ENCODE measurements at regions of chr10 and their contacts with region 1.

Region 1: DNA sequence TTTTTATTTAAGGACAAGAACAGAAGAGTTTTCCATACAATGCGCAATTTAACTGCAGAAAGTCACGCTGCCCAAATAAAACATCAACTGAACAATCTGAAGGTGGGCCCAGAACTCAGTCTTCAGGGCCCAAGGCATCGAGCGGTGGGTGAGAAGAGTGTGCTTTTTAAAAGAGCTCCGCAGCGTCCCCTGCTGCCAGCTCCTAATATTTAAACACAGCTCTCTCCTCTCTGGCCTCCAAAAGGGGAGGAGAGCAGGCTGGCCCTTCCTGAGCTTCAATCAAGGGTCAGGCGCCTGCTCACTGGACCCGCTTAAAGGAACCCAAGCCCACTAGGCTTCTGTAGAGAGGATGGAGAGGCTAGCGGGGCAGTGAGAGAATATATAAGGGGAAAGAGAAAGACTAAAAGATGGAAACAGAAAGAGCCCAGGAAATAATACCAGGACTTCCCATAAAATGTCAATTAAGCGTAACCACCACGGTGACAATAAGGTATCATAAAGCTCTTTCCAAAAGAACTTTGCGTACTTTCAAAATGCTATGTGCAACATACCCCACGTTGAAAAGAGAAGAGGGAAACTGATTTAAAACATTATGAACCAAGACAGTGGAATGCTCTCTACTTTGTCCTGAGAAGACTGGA is 2.8 kb downstream of the FAM53B start:
- DNase-seq: peak in 1 of 2 experiments; percentile 90
- H3K4me3 ChIP-seq: peak overlapping the region in 1 of 4 experiments; percentile 35; a peak in 1 of 8 replicates
- H3K27ac ChIP-seq: no peak overlapping the region
- H3K4me1 ChIP-seq: peaks cover 29 to 45% (median 32%) of the 10 kb centered on the region in 4 experiments
- H3K27me3 ChIP-seq: peaks cover 1 to 21% (median 14%) of the 10 kb centered on the region in 4 experiments; a peak in 6 of 7 replicates
- CTCF ChIP-seq: peak; percentile 53 to 82 (median 82)
- EP300 ChIP-seq: no peak
- POLR2A ChIP-seq: no peak
- RAD21 ChIP-seq: peak; percentile 72 to 79

Region 2: DNA sequence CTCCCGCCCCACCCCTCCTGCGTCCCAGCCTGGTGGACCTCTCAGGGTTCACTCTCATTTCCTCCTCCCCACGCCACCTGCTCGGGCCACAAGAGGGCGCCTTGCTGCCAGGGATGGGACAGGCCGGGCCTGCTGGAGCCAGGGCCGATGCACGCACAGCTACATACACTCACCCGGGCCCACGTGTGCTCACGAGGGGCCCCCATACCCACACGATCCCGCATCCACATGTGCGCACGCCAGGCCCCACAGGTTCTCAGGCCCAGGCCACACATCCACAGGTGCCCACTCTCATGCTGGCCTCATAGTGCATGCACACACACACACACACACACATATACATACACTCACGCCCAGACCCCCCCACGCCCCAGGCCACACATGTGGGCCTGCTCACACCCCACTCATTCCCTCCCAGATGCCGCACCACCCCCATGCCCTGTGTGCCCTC is 211.2 kb before region 1 on chr10:
- CTCF ChIA-PET with region 1: interaction called, 49 read pairs
- POLR2A ChIA-PET with region 1: no interaction called
- DNase-seq: peak; percentile 36 to 96
- H3K4me3 ChIP-seq: no peak overlapping the region
- H3K27ac ChIP-seq: no peak overlapping the region
- H3K4me1 ChIP-seq: peaks cover 0 to 20% (median 4%) of the 10 kb centered on the region in 4 experiments; a peak in 5 of 7 replicates
- H3K27me3 ChIP-seq: no peaks in the 10 kb centered on the region
- CTCF ChIP-seq: peak in 2 of 3 experiments; percentile 95; a peak in 3 of 4 replicates
- EP300 ChIP-seq: no peak
- POLR2A ChIP-seq: no peak
- RAD21 ChIP-seq: peak; percentile 91 to 94

Region 3: GRCh38 chr10:124565565-124566256 is 175.7 kb before region 1 on chr10:
- CTCF ChIA-PET with region 1: interaction called, 10 read pairs
- POLR2A ChIA-PET with region 1: no interaction called
- DNase-seq: peak; percentile 53 to 87
- H3K4me3 ChIP-seq: no peak overlapping the region
- H3K27ac ChIP-seq: no peak overlapping the region
- H3K4me1 ChIP-seq: peaks cover 3 to 9% (median 7%) of the 10 kb centered on the region in 4 experiments; a peak in 6 of 7 replicates
- H3K27me3 ChIP-seq: no peaks in the 10 kb centered on the region
- CTCF ChIP-seq: peak; percentile 79 to 86 (median 85)
- EP300 ChIP-seq: no peak
- POLR2A ChIP-seq: no peak
- RAD21 ChIP-seq: peak; percentile 82 to 90

Region 4: DNA sequence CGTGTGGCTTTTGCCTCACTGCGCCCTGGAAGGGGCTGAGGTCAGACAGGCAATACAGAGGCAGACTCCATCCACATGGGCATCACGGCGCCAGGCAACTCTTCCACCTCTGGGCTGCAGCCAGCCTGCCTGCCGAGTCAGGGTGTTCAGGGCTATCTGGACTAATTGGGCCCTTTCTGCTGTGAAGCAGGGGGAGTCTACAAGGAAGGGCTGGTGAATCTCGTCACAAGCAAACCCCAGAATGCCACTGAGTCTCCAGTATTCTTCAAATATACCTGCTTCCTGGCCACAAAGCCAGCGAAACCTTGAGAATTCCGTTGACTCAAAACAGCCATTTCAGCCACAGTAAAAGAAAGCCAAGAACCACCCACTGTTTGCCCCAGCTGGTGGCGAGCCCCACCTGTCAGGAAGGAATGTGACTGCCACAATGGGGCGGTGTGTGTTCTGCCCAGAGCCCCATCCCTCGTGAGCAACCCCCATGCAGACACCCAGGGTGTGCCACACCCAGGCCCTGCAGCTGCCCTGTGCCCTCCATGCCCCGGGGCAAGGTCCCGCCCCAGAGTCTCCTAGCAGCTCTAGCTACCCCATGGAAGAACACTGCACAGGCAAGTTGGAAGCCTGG is 114.5 kb before region 1 on chr10:
- CTCF ChIA-PET with region 1: interaction called, 20 read pairs
- POLR2A ChIA-PET with region 1: interaction called, 4 read pairs
- DNase-seq: no peak
- H3K4me3 ChIP-seq: no peak overlapping the region
- H3K27ac ChIP-seq: no peak overlapping the region
- H3K4me1 ChIP-seq: peaks cover 6 to 21% (median 12%) of the 10 kb centered on the region in 4 experiments
- H3K27me3 ChIP-seq: no peaks in the 10 kb centered on the region; a peak in 1 of 7 replicates
- CTCF ChIP-seq: no peak
- EP300 ChIP-seq: no peak
- POLR2A ChIP-seq: no peak
- RAD21 ChIP-seq: no peak

Region 5: DNA sequence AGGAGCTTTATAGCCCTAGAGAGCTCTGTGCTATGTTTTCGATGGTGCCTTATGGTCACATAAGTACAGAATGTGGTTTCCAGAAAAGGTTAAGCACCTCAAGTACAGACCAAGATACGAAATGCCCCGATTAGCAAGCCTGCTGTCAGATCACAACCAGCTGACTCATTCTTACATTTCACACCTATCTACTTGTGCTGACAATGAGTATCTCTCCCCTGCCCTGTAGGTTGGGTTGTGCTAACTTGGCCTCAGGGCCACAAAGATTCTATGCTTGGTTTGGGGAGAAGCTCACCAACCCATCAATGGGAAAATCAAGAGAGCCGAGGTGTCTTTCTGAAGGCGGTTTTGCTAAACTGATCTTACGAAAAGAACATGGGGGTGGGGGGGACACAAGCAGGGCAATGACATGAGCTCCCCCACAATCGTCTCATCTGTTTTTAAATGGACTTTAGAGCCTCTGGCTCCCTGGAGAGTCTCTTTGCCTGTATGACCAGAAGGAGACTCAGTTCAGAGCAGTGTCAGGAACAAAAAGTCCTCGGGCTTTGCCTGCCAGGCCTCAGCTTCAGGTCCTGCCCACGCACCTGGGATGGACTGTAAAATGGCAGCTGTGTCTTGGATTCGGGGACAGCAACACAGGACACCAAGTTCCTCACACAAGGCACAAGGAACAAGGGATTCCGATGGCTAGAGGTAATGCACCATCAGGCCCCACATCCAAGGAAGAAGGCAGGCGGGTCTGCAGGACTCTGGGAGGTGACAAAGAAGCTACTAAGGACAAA is 52.3 kb before region 1 on chr10:
- CTCF ChIA-PET with region 1: interaction called, 19 read pairs
- POLR2A ChIA-PET with region 1: no interaction called
- DNase-seq: no peak
- H3K4me3 ChIP-seq: no peak overlapping the region
- H3K27ac ChIP-seq: no peak overlapping the region
- H3K4me1 ChIP-seq: peaks cover 0 to 10% (median 5%) of the 10 kb centered on the region in 4 experiments; a peak in 3 of 7 replicates
- H3K27me3 ChIP-seq: no peaks in the 10 kb centered on the region
- CTCF ChIP-seq: no peak
- EP300 ChIP-seq: no peak
- POLR2A ChIP-seq: no peak
- RAD21 ChIP-seq: no peak

Region 6: GRCh38 chr10:124719213-124719851 is 22.1 kb before region 1 on chr10:
- CTCF ChIA-PET with region 1: interaction called, 86 read pairs
- POLR2A ChIA-PET with region 1: interaction called, 5 read pairs
- DNase-seq: no peak
- H3K4me3 ChIP-seq: no peak overlapping the region
- H3K27ac ChIP-seq: no peak overlapping the region
- H3K4me1 ChIP-seq: peaks cover 0 to 1% (median 0%) of the 10 kb centered on the region in 4 experiments; a peak in 1 of 7 replicates
- H3K27me3 ChIP-seq: no peaks in the 10 kb centered on the region
- CTCF ChIP-seq: peak; percentile 48 to 68 (median 57); a peak in 3 of 4 replicates
- EP300 ChIP-seq: no peak
- POLR2A ChIP-seq: no peak
- RAD21 ChIP-seq: peak; percentile 32 to 49

Measured in H1 (cell line).